T-cell (primary cell): ENCODE measurements at regions of chr6 and their contacts with region 1.

Region 1: DNA sequence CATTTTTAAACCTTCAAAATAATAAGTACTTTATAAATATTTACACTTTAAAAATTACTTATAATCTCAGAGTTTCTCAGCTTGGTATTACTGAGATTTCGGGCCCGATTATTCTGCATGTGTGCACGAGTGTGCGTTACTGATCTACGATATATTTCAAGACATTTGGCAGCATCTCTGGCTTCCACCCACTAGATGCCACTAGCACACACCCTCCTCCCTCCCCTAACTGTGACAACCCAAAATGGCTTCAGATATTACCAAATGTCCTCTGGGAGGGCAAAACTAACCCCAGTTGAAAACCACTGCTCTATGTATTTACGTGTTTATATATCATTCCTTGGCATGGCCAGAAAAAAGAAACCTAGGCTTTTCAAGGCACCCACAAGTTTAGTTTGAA is 95.9 kb downstream of the FYN start:
- DNase-seq: peak in 15 of 35 experiments; percentile 12 to 73 (median 35)
- ATAC-seq: peak; percentile 35 to 60 (median 57)
- H3K4me3 ChIP-seq: no peak overlapping the region
- H3K4me3 Mint-ChIP-seq: peak overlapping the region; percentile 6 to 39 (median 34)
- H3K27ac ChIP-seq: peak overlapping the region; percentile 73
- H3K27ac Mint-ChIP-seq: peak overlapping the region; percentile 87 to 88
- H3K4me1 ChIP-seq: peaks cover 40 to 82% of the 10 kb centered on the region in 2 experiments
- H3K4me1 Mint-ChIP-seq: peaks cover 88 to 93% (median 90%) of the 10 kb centered on the region in 3 donors
- H3K27me3 ChIP-seq: no peaks in the 10 kb centered on the region
- H3K27me3 Mint-ChIP-seq: no peaks in the 10 kb centered on the region

Region 2: GRCh38 chr6:111952821-111953540 is 175.6 kb after region 1 on chr6:
- CTCF ChIA-PET with region 1: interaction called in 1 of 2 experiments, 6 read pairs
- POLR2A ChIA-PET with region 1: interaction called in 1 of 2 experiments, 11 read pairs
- DNase-seq: no peak
- ATAC-seq: no peak
- H3K4me3 ChIP-seq: no peak overlapping the region
- H3K4me3 Mint-ChIP-seq: no peak overlapping the region
- H3K27ac ChIP-seq: no peak overlapping the region
- H3K27ac Mint-ChIP-seq: no peak overlapping the region
- H3K4me1 ChIP-seq: no peaks in the 10 kb centered on the region
- H3K4me1 Mint-ChIP-seq: peaks cover 4 to 13% (median 12%) of the 10 kb centered on the region in 3 donors
- H3K27me3 ChIP-seq: peaks cover 0 to 5% of the 10 kb centered on the region in 2 experiments
- H3K27me3 Mint-ChIP-seq: no peaks in the 10 kb centered on the region

Region 3: GRCh38 chr6:112010328-112010727 is 233.0 kb after region 1 on chr6:
- CTCF ChIA-PET with region 1: interaction called in 1 of 2 experiments, 3 read pairs
- POLR2A ChIA-PET with region 1: interaction called in 1 of 2 experiments, 10 read pairs
- DNase-seq: peak in 2 of 35 experiments; percentile 43 to 58
- ATAC-seq: peak; percentile 73 to 89 (median 86)
- H3K4me3 ChIP-seq: no peak overlapping the region
- H3K4me3 Mint-ChIP-seq: no peak overlapping the region
- H3K27ac ChIP-seq: no peak overlapping the region
- H3K27ac Mint-ChIP-seq: peak overlapping the region in 1 of 2 donors; percentile 2
- H3K4me1 ChIP-seq: peaks cover 2 to 3% of the 10 kb centered on the region in 2 experiments
- H3K4me1 Mint-ChIP-seq: peaks cover 9 to 13% (median 9%) of the 10 kb centered on the region in 3 donors
- H3K27me3 ChIP-seq: no peaks in the 10 kb centered on the region
- H3K27me3 Mint-ChIP-seq: no peaks in the 10 kb centered on the region

Region 4: DNA sequence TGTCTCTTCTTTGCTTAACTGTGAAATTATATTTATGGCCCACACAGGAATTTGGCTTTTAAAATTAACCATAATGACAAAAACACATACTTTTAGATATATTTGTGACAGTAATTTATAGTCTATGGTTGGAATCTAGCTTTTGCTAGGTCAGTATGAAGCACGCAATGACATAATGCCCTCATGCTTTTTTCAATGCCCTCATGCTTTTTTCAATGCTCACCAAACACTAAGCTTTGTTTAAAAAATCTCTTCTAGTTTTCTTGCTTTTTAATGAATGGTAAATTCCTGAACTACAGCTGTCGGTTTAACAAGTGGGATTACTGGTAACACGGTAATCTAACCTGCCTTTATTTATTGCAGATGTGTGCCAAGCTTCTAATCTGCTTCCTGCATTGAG is 289.2 kb after region 1 on chr6:
- CTCF ChIA-PET with region 1: interaction called in 1 of 2 experiments, 11 read pairs
- POLR2A ChIA-PET with region 1: no interaction called
- DNase-seq: no peak
- ATAC-seq: no peak
- H3K4me3 ChIP-seq: no peak overlapping the region
- H3K4me3 Mint-ChIP-seq: no peak overlapping the region
- H3K27ac ChIP-seq: no peak overlapping the region
- H3K27ac Mint-ChIP-seq: no peak overlapping the region
- H3K4me1 ChIP-seq: no peaks in the 10 kb centered on the region
- H3K4me1 Mint-ChIP-seq: peaks cover 2 to 10% (median 4%) of the 10 kb centered on the region in 3 donors
- H3K27me3 ChIP-seq: no peaks in the 10 kb centered on the region
- H3K27me3 Mint-ChIP-seq: no peaks in the 10 kb centered on the region